PC-3 (cell line): ENCODE measurements at regions of chr1 and their contacts with region 1.

Region 1: GRCh38 chr1:40281853-40282252 is 23.8 kb downstream of the ZMPSTE24 start:
- DNase-seq: no peak
- ATAC-seq: peak; percentile 87
- H3K4me3 ChIP-seq: no peak overlapping the region
- H3K27ac ChIP-seq: no peak overlapping the region
- H3K4me1 ChIP-seq: no peaks in the 10 kb centered on the region
- H3K27me3 ChIP-seq: no peaks in the 10 kb centered on the region
- CTCF ChIP-seq: no peak

Region 2: DNA sequence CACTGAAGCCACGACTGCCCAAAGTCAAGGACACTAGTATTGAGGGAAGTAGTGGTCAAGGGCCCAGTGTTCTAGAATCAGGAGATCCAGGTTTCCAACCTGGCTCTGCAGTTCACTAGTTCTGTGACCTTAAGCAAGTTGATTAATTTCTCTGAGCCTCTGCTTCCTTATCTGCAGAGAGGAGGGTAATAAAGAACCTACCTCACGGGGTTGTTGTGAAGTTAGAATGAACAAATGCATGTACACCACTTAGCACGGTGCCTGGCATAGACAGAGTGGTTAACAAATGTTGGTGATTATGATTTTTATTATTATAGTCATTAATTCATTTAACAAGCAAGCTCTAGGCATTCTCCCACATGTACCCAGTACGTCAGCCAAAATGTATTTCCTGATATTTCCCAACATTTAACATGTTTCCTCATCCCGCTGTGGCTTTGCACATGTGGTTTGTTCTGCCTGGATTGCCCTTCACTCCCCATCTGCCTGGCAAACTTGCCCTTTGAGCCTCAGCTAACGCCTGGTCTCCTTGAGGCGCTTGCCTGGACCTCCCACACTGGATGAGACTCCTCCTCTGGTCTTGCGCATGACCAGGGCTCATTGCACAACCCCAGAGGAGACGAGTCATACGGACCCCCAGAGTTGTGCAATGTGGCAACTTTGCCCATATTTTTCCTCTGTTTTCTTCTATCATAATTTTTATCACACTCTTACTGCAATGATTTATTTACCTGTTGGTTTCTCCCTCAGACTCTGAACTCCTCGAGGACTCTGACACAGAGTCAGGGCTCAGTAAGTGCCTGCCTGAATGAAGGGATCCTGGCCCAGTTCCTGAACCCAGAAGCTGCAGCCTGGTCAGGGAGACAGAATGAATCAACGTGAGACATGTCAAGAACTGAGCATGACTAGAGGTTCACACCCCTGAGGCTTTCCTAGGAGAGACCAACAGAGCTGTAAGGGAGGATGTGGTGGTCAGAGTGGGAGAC is 347.6 kb before region 1 on chr1:
- CTCF ChIA-PET with region 1: no interaction called
- POLR2A ChIA-PET with region 1: interaction called, 10 read pairs
- intact Hi-C with region 1: no loop called
- DNase-seq: peak; percentile 32
- ATAC-seq: no peak
- H3K4me3 ChIP-seq: no peak overlapping the region
- H3K27ac ChIP-seq: no peak overlapping the region
- H3K4me1 ChIP-seq: no peaks in the 10 kb centered on the region
- H3K27me3 ChIP-seq: no peaks in the 10 kb centered on the region
- CTCF ChIP-seq: no peak

Region 3: DNA sequence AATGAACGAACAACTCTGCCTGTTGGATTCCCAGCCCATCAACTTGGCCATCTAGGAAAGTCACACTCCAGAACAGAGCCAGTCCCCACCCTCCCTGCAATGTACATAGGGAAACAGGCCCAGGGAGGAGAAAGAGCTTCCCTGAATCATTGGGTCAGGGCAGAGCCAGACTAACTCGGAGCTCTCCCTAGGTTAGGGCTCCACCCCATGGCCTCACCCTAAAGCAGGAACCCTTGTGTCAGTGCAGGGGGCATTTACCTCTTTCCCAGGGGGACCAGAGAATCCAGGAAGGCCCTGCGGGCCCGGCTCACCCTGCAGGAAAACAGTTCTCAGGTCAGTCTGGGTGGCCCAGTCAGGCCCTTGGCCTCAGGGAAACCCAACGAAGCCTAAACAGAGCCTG is 23.6 kb after region 1 on chr1:
- CTCF ChIA-PET with region 1: no interaction called
- POLR2A ChIA-PET with region 1: no interaction called
- intact Hi-C with region 1: no loop called
- DNase-seq: peak; percentile 51
- ATAC-seq: peak; percentile 82
- H3K4me3 ChIP-seq: no peak overlapping the region
- H3K27ac ChIP-seq: no peak overlapping the region
- H3K4me1 ChIP-seq: peaks cover 7% of the 10 kb centered on the region; the same call in 1 of the 2 replicates
- H3K27me3 ChIP-seq: no peaks in the 10 kb centered on the region
- CTCF ChIP-seq: peak; percentile 43; the same call in 1 of the 2 replicates

Region 4: DNA sequence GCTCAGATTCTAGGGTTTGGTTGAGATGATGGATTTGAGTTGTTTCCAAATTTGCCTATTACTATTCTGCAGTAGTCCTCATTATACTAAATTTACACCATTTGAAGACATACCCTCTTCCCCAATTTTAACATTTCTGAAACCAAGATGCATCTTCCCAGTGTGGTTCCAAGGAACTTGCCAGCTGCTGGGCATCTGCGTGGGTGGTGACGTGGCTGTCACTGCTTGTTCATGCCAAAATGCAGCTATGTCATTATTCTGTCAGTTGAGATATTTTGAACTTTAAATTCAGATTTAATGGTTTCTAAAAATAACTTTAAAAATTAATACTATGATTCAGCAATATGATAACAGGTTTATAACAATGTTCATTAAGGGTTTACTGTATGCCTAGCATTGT is 196.4 kb after region 1 on chr1:
- CTCF ChIA-PET with region 1: no interaction called
- POLR2A ChIA-PET with region 1: interaction called, 16 read pairs
- intact Hi-C with region 1: no loop called
- DNase-seq: no peak
- ATAC-seq: no peak
- H3K4me3 ChIP-seq: no peak overlapping the region
- H3K27ac ChIP-seq: no peak overlapping the region
- H3K4me1 ChIP-seq: no peaks in the 10 kb centered on the region
- H3K27me3 ChIP-seq: no peaks in the 10 kb centered on the region
- CTCF ChIP-seq: no peak